ENCODE measurements at regions of chr5 and their contacts with region 1.

Region 1: DNA sequence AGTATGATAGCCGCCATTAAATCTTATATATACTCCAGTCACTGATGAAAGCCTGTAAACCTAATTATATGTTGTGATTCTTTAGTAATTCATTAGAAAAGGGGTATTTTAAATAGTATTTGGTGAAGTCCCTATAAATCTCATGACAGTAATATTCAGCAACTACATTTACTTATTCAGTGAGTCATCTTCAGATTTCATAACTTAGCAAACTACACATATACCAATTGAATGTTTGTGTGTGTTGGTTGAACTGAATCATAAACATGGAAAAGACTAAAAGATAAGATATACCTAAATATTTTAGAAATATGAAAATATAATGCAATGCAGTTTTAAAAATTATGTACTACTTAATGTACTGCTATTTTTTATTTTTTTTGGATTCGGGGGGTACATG is 1050.4 kb downstream of the MAT2B start:
- DNase-seq: no peak
- ATAC-seq: no peak
- H3K4me3 Mint-ChIP-seq: no peak overlapping the region
- H3K27ac Mint-ChIP-seq: no peak overlapping the region
- H3K4me1 Mint-ChIP-seq: no peaks in the 10 kb centered on the region
- H3K27me3 Mint-ChIP-seq: no peaks in the 10 kb centered on the region
- CTCF ChIP-seq: no peak

Region 2: GRCh38 chr5:164545507-164545906 is 10.3 kb before region 1 on chr5:
- CTCF ChIA-PET with region 1: no interaction called
- POLR2A ChIA-PET with region 1: no interaction called
- intact Hi-C with region 1: loop called (anchors 1 kb)
- DNase-seq: no peak
- ATAC-seq: no peak
- H3K4me3 Mint-ChIP-seq: no peak overlapping the region
- H3K27ac Mint-ChIP-seq: no peak overlapping the region
- H3K4me1 Mint-ChIP-seq: no peaks in the 10 kb centered on the region
- H3K27me3 Mint-ChIP-seq: no peaks in the 10 kb centered on the region
- CTCF ChIP-seq: no peak